ENCODE measurements at regions of chr9 and their contacts with region 1.

Region 1: DNA sequence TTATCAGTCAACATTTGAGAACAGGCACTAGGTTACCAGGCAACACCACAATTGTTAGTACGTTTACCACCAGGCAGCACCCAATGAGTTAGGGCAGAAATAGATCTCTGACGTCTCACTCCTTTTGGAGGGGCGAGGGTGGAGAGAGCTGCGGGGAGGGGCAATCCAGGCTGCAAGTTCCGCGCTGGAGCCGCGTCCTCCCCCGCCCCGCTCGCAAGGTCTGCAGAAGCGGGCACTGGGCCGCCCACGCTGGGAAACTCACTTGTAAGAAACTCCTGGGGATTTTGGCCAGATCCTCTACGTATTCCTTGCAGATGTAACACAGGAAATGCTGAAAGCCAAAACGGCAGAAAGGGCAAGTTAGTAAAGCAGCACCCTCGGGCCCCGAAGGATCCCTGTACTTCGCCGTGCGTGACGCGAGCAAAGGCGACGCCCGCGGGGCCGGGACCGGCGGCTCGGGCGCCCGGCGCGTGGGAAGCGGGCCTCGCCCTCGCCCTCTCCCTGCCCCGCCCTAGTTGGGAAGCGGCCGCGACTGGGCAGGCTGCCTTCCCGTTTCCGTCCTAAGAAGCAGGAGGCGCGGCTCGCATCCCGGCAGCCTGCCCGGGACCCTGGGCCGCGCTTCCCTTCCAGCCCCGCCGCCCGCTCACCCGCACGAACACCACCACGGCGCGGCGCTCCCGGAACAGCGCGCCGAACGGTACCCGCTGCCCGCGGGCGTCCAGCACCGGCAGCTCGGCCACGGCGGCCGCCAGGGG is 497 bp downstream of the PRXL2C start:
- DNase-seq: peak; percentile 57
- H3K4me3 ChIP-seq: peak overlapping the region; percentile 68 to 73
- H3K27ac ChIP-seq: peak overlapping the region; percentile 93 to 95
- H3K4me1 ChIP-seq: no peaks in the 10 kb centered on the region
- H3K27me3 ChIP-seq: no peaks in the 10 kb centered on the region
- CTCF ChIP-seq: peak in 1 of 4 experiments; percentile 43
- POLR2A ChIP-seq: no peak

Region 2: GRCh38 chr9:96418074-96418809 is 236.4 kb before region 1 on chr9 and contains the start of gene ZNF367:
- intact Hi-C with region 1: loop called (anchors 2 kb)
- DNase-seq: peak; percentile 97
- H3K4me3 ChIP-seq: peak within 1 kb of the TSS; percentile 75 to 77
- H3K27ac ChIP-seq: peak within 1 kb of the TSS; percentile 97 to 99
- H3K4me1 ChIP-seq: peaks cover 5% of the 10 kb centered on the region
- H3K27me3 ChIP-seq: no peaks in the 10 kb centered on the region
- CTCF ChIP-seq: no peak
- POLR2A ChIP-seq: peak; percentile 34
- total RNA-seq, gene ZNF367: 2.9 to 5.5 TPM

Region 3: DNA sequence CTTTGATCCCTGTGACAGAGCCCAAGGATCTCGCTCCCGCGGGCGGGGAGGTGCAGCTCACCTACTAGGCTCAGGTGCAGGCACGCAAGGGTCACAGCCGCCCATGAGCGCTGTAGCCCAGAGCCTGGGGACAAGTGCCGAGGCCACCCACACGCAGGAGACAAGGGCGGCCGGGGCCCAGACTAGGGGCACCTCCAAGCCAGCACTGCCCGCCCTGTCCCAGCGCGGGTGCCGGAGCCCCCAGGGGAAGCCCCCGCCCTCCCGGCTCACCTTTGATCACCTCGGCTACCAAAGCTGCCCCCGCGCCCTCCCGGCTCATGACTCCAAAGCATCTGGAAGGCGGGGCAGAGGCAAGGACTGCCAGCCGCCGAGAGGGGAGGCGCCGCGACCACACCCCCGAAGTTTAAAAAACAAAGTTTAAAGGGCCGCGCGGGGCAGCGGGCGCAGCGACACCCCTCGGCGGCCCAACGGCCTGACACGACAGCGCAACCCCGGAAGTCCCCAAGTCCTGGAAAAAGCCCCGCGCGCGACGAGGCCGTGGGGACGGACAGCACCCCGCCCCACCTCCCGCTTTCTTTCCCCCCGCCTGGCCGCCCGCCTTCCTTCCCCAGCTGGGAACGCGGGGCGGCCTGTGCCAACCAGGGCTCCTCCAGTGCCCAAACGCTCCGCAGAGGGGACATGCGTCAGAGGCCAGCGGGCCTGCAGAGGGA is 88.0 kb before region 1 on chr9:
- intact Hi-C with region 1: loop called (anchors 5 kb)
- DNase-seq: peak; percentile 69
- H3K4me3 ChIP-seq: peak overlapping the region; percentile 57 to 67
- H3K27ac ChIP-seq: peak overlapping the region; percentile 88 to 91
- H3K4me1 ChIP-seq: peaks cover 6% of the 10 kb centered on the region
- H3K27me3 ChIP-seq: no peaks in the 10 kb centered on the region
- CTCF ChIP-seq: peak in 3 of 4 experiments; percentile 54 to 70 (median 61)
- POLR2A ChIP-seq: no peak

Region 4: GRCh38 chr9:96619491-96620154 is 35.0 kb before region 1 on chr9 and contains the start of gene CDC14B:
- intact Hi-C with region 1: loop called (anchors 5 kb)
- DNase-seq: peak; percentile 96
- H3K4me3 ChIP-seq: peak within 1 kb of the TSS; percentile 69 to 78
- H3K27ac ChIP-seq: peak within 1 kb of the TSS; percentile 88 to 92
- H3K4me1 ChIP-seq: no peaks in the 10 kb centered on the region
- H3K27me3 ChIP-seq: no peaks in the 10 kb centered on the region
- CTCF ChIP-seq: peak in 2 of 4 experiments; percentile 15 to 40
- POLR2A ChIP-seq: peak; percentile 62
- total RNA-seq, gene CDC14B: 27.0 to 34.7 TPM

Region 5: DNA sequence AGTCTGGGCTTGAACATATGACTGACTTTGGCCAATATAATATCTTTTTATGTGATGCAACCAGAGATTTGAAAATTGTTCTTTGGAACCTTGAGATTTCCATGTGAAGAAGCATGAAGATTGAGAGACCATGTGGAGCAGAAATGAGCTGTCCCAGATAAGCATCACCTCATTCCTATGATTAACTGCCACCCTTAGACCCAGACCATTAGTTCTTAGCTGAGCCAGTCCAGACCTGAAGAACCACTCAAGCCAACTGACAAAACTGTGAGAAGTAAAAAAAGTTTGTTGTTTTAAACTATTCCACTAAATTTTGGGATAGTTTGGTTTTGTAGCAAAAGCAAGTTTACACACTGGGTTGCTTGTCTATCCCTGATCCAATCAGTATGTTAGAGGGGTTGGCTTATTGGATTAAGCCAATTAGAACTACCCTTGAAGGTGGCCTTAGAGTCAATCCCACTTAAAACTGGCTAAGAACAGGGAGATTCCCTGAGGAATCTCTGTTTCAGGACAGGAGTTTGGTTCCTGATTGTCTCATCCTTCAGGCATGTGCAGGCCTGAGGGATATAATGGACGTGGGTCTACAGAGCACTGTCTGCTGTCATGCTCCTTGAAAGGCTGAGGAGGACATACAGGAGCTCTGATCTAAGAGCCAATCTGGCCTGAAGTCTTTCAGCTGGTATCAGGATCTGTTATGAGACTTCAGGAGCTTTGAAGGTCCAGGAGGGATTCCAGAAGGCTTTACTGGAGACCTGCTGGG is 36.5 kb after region 1 on chr9:
- intact Hi-C with region 1: no loop called
- DNase-seq: no peak
- H3K4me3 ChIP-seq: no peak overlapping the region
- H3K27ac ChIP-seq: no peak overlapping the region
- H3K4me1 ChIP-seq: no peaks in the 10 kb centered on the region
- H3K27me3 ChIP-seq: no peaks in the 10 kb centered on the region
- CTCF ChIP-seq: no peak
- POLR2A ChIP-seq: no peak

Measured in prostate gland (tissue), 2 donors.